Activated naive CD4-positive, alpha-beta T cell treated with anti-CD3 and anti-CD28 coated beads for 36 hours (primary cell): ENCODE measurements at regions of chr10 and their contacts with region 1.

Region 1: DNA sequence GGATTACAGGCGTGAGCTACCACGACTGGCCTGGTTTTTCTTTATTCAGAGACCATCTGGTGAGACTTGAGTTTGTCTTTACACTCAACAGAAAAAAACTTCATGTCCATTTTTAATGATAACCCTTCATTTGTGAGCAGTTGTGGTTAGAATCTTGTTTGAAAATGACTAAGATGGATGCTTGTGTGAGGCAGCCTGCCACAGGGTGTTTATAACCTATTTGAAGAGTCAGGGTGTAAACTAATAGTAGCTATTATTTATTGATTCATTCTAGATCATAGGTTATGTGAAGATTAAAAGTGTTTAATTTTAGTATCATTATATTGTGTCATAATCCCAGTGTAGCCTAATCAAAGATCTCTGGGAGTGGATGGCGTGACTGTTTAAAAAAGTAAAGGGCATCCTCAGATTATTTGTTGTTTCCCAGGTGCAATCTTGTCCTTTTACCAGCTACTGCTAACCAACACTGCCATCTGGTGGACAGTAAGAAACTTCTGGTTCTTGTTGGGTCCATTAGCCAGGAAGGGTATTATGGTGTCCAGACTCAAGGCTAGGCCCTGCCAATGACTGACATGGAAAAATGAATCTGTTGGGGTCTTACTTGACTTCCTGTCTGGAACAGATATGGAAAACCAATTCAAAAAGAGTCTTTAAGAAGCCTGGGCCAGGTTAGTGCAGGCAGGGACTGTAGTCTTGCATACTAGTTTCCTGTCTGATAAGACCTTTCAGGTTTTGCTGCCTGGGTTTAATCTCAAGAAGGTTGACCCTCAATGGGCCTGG is 24.9 kb downstream of the NRBF2 start:
- DNase-seq: peak; percentile 67
- H3K4me3 Mint-ChIP-seq: no peak overlapping the region
- H3K27ac Mint-ChIP-seq: no peak overlapping the region
- H3K4me1 Mint-ChIP-seq: peaks cover 11% of the 10 kb centered on the region
- H3K27me3 Mint-ChIP-seq: no peaks in the 10 kb centered on the region

Region 2: GRCh38 chr10:62437696-62438095 is 720.3 kb before region 1 on chr10:
- CTCF ChIA-PET with region 1: interaction called, 8 read pairs
- intact Hi-C with region 1: loop called (anchors 1 kb)
- DNase-seq: no peak
- H3K4me3 Mint-ChIP-seq: no peak overlapping the region
- H3K27ac Mint-ChIP-seq: no peak overlapping the region
- H3K4me1 Mint-ChIP-seq: peaks cover 19% of the 10 kb centered on the region
- H3K27me3 Mint-ChIP-seq: peaks cover 10% of the 10 kb centered on the region

Region 3: DNA sequence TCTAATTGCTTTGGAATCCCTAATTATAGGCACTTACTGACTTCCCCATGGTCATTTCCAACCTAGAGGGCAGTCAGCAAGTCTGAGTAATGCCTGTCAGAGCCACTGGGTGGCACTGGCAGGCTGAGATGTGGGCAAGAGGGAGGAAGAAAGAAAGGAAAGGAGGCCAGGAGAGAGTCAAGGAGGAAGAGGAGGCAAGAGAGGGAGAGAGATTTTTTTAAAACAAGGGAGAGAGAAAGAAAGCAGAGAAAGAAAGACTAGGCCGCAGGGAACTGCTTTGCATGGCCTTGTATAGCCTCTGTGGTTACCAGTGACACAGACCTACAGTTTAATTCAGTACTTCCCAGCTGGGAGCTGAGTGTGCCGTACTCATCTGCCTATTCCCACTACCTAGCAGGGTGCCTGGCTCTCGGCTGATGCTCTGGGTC is 563.9 kb before region 1 on chr10:
- CTCF ChIA-PET with region 1: interaction called, 24 read pairs
- intact Hi-C with region 1: loop called (anchors 1 kb)
- DNase-seq: peak; percentile 66
- H3K4me3 Mint-ChIP-seq: no peak overlapping the region
- H3K27ac Mint-ChIP-seq: no peak overlapping the region
- H3K4me1 Mint-ChIP-seq: peaks cover 2% of the 10 kb centered on the region
- H3K27me3 Mint-ChIP-seq: peaks cover 7% of the 10 kb centered on the region

Region 4: GRCh38 chr10:62851442-62851841 is 306.6 kb before region 1 on chr10:
- CTCF ChIA-PET with region 1: interaction called, 3 read pairs
- intact Hi-C with region 1: loop called (anchors 5 kb)
- DNase-seq: peak; percentile 39
- H3K4me3 Mint-ChIP-seq: no peak overlapping the region
- H3K27ac Mint-ChIP-seq: no peak overlapping the region
- H3K4me1 Mint-ChIP-seq: peaks cover 29% of the 10 kb centered on the region
- H3K27me3 Mint-ChIP-seq: peaks cover 10% of the 10 kb centered on the region

Region 5: GRCh38 chr10:63030541-63030940 is 127.5 kb before region 1 on chr10:
- CTCF ChIA-PET with region 1: no interaction called
- intact Hi-C with region 1: no loop called
- DNase-seq: no peak
- H3K4me3 Mint-ChIP-seq: no peak overlapping the region
- H3K27ac Mint-ChIP-seq: no peak overlapping the region
- H3K4me1 Mint-ChIP-seq: no peaks in the 10 kb centered on the region
- H3K27me3 Mint-ChIP-seq: no peaks in the 10 kb centered on the region

Region 6: GRCh38 chr10:63083904-63084689 is 73.9 kb before region 1 on chr10:
- CTCF ChIA-PET with region 1: interaction called, 32 read pairs
- intact Hi-C with region 1: loop called (anchors 1 kb)
- DNase-seq: peak; percentile 52
- H3K4me3 Mint-ChIP-seq: no peak overlapping the region
- H3K27ac Mint-ChIP-seq: no peak overlapping the region
- H3K4me1 Mint-ChIP-seq: no peaks in the 10 kb centered on the region
- H3K27me3 Mint-ChIP-seq: peaks cover 4% of the 10 kb centered on the region

Region 7: DNA sequence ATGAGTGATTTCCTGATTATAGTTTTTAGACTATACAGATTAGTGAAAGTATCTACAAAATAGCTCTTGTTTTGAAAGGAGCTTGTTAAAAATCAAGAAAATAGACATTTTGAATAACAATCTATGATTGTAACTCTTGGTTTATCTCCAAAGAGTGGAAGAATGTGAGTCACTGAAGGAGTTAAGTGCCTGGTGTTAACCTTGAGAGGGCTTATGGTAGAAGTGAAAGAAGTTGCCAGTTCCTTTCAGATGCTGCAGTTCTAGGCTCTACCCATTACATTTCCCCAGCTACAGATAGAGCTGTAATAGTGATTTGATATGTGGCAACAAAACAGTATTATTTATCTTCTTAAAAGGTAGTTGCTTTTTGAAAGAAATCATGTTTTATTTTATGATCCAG is 12.3 kb before region 1 on chr10:
- CTCF ChIA-PET with region 1: interaction called, 14 read pairs
- intact Hi-C with region 1: no loop called
- DNase-seq: no peak
- H3K4me3 Mint-ChIP-seq: no peak overlapping the region
- H3K27ac Mint-ChIP-seq: no peak overlapping the region
- H3K4me1 Mint-ChIP-seq: peaks cover 42% of the 10 kb centered on the region
- H3K27me3 Mint-ChIP-seq: no peaks in the 10 kb centered on the region

Region 8: DNA sequence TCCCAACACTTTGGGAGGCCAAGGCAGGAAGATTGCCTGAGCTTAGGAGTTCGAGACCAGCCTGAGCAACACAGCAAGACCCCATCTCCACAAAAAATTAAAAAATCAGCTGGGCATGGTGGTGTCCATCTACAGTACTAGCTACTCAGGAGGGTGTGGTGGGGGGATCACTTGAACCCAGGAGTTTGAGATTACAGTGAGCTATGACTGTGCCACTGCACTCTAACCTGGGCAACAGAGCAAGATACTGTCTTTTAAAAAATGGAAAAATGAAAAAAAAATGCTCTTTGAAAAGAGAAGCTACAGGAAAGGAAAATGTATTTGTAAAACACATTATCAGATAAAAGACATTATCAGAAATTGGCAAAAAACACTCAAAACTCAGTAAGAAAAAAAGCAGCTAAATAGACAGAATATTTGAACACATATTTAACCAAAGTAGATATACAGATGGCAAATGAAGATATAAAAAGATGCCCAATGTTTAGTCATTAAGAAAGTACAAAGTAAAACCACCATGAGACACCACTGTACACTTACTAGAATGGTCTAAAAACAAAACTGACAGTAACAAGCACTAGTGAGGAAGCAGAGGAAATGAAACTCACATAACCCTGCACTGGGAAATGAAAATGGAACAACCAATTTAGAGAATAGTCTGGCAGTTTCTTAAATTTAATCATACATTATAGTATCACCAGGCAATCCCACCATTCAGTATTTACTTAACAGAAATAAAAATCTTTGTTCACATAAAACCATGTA is 15.6 kb after region 1 on chr10:
- CTCF ChIA-PET with region 1: no interaction called
- intact Hi-C with region 1: no loop called
- DNase-seq: peak; percentile 18
- H3K4me3 Mint-ChIP-seq: no peak overlapping the region
- H3K27ac Mint-ChIP-seq: peak overlapping the region; percentile 71
- H3K4me1 Mint-ChIP-seq: peaks cover 62% of the 10 kb centered on the region
- H3K27me3 Mint-ChIP-seq: no peaks in the 10 kb centered on the region

Region 9: DNA sequence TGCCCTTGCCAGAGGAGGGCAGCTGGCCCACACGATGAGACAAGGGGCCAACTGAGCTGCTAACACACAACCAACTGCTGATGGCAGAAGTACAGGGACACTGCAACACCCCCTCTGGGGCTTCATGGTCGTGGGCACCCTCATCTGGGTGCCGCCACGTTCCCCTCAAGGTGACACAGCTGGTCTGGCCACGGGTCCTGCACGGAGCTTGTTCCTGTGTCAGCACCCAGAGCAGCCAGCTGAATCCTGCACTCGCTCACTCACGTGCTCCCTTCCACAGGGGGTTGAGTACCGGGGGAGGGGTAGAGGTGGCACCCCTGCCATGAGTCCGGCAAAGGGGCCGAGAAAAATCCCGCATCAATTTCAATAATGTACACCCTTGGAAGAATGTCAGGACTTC is 1682.3 kb after region 1 on chr10:
- CTCF ChIA-PET with region 1: no interaction called
- intact Hi-C with region 1: no loop called
- DNase-seq: no peak
- H3K4me3 Mint-ChIP-seq: no peak overlapping the region
- H3K27ac Mint-ChIP-seq: no peak overlapping the region
- H3K4me1 Mint-ChIP-seq: no peaks in the 10 kb centered on the region
- H3K27me3 Mint-ChIP-seq: no peaks in the 10 kb centered on the region